MCF 10A (cell line): ENCODE measurements at regions of chr19 and their contacts with region 1.

Region 1: GRCh38 chr19:42244347-42245220 is 2.2 kb upstream of the GSK3A start:
- DNase-seq: peak; percentile 97
- H3K4me3 Mint-ChIP-seq: peak overlapping the region; percentile 79
- H3K27ac Mint-ChIP-seq: peak overlapping the region; percentile 81
- H3K4me1 Mint-ChIP-seq: peaks cover 37% of the 10 kb centered on the region
- H3K27me3 Mint-ChIP-seq: no peaks in the 10 kb centered on the region
- CTCF ChIP-seq: peak; percentile 60

Region 2: GRCh38 chr19:42219812-42220750 is 24.5 kb before region 1 on chr19 and contains the start of gene ZNF526:
- CTCF ChIA-PET with region 1: interaction called, 3 read pairs
- POLR2A ChIA-PET with region 1: interaction called, 50 read pairs
- intact Hi-C with region 1: no loop called
- DNase-seq: peak; percentile 98
- H3K4me3 Mint-ChIP-seq: peak within 1 kb of the TSS; percentile 91
- H3K27ac Mint-ChIP-seq: peak within 1 kb of the TSS; percentile 86
- H3K4me1 Mint-ChIP-seq: peaks cover 24% of the 10 kb centered on the region
- H3K27me3 Mint-ChIP-seq: no peaks in the 10 kb centered on the region
- CTCF ChIP-seq: no peak
- total RNA-seq, gene ZNF526: 11.5 and 12.3 TPM in 2 replicates

Region 3: GRCh38 chr19:42261763-42262162 is 17.2 kb after region 1 on chr19:
- CTCF ChIA-PET with region 1: interaction called, 11 read pairs
- POLR2A ChIA-PET with region 1: interaction called, 4 read pairs
- intact Hi-C with region 1: no loop called
- DNase-seq: no peak
- H3K4me3 Mint-ChIP-seq: no peak overlapping the region
- H3K27ac Mint-ChIP-seq: no peak overlapping the region
- H3K4me1 Mint-ChIP-seq: no peaks in the 10 kb centered on the region
- H3K27me3 Mint-ChIP-seq: no peaks in the 10 kb centered on the region
- CTCF ChIP-seq: no peak

Region 4: GRCh38 chr19:42283143-42284065 is 38.8 kb after region 1 on chr19:
- CTCF ChIA-PET with region 1: interaction called, 145 read pairs
- POLR2A ChIA-PET with region 1: interaction called, 158 read pairs
- intact Hi-C with region 1: loop called (anchors 1 kb)
- DNase-seq: peak; percentile 96
- H3K4me3 Mint-ChIP-seq: no peak overlapping the region
- H3K27ac Mint-ChIP-seq: no peak overlapping the region
- H3K4me1 Mint-ChIP-seq: peaks cover 27% of the 10 kb centered on the region
- H3K27me3 Mint-ChIP-seq: no peaks in the 10 kb centered on the region
- CTCF ChIP-seq: no peak

Region 5: DNA sequence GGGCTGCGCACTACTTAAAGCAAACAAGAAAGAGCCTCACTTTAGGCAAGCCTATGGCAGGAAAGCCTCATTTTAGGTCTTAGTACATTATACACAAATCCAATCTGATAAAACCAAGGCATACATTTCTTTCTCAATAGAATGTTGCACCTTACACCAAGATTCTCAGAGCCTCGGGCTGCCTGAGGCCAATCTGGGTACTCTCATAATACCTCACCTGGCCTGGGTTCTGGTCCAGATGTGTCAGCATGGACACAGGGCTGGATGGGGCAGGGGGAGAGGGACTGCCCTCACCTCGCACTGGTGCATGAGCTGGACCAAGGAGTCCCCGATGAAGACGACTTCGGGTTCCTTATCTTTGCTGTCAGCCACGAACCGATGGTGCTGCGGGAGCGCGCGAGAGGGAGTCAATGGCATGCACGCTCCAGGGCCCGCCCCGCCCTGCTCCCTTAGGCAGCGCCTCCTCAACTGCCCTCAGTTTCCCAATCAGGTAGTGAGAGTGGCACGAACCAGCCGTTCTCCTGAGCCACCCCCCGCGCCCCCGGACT is 57.1 kb after region 1 on chr19 and contains the start of gene PRR19:
- CTCF ChIA-PET with region 1: interaction called, 44 read pairs
- POLR2A ChIA-PET with region 1: interaction called, 11 read pairs
- intact Hi-C with region 1: loop called (anchors 5 kb)
- DNase-seq: no peak
- H3K4me3 Mint-ChIP-seq: peak within 1 kb of the TSS; percentile 90
- H3K27ac Mint-ChIP-seq: peak within 1 kb of the TSS; percentile 57
- H3K4me1 Mint-ChIP-seq: peaks cover 11% of the 10 kb centered on the region
- H3K27me3 Mint-ChIP-seq: no peaks in the 10 kb centered on the region
- CTCF ChIP-seq: no peak
- total RNA-seq, gene PRR19: 0.30 and 0.64 TPM in 2 replicates

Region 6: DNA sequence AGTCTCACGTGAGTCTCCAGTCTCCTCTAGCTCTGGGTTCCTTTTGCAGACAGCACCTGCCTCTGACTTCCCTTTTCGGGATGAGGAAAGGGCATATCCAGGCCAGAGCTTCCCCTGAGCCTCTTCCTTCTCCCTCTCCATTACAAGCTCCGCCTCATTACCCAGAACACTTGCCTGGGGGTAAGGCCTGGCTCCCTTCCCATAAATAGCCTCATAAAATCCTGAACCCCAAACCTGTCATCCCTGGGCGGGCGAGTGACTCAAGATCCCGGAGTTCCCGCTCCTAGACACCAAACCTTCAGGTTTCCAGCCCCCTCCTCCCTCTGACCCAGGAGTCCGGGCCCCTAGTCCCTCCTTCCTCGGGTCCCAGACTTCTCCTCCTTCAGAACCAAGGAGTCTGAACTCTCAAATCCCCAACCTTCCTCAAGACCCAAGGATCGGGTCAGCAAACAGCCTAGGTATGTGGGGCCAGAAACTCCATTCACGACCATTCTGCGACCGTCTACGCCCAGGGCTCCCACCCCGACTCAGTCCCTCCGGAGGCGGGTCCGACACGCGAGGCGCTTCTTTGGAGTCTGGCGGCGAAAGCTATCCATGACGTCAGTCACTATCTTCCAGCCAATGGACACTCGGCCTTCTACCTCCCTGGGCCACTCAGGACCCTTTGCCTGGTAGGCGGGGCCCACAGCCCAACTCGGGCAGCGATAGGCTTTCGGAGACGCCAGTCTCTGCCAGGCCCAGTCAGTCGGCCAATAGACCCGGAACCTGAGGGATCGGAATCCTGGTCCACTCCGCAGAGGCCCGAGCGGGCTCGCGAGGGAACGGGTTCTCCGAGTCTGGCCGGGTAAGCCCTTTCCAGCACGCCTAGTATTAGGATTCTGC is 152.0 kb after region 1 on chr19:
- CTCF ChIA-PET with region 1: interaction called, 4 read pairs
- POLR2A ChIA-PET with region 1: interaction called, 5 read pairs
- intact Hi-C with region 1: loop called (anchors 10 kb)
- DNase-seq: peak; percentile 99
- H3K4me3 Mint-ChIP-seq: peak overlapping the region; percentile 83
- H3K27ac Mint-ChIP-seq: peak overlapping the region; percentile 99
- H3K4me1 Mint-ChIP-seq: peaks cover 47% of the 10 kb centered on the region
- H3K27me3 Mint-ChIP-seq: peaks cover 9% of the 10 kb centered on the region
- CTCF ChIP-seq: no peak